AG04449 (cell line): ENCODE measurements at regions of chr9 and their contacts with region 1.

Region 1: GRCh38 chr9:115591584-115591984 is 473.6 kb upstream of the TNC start:
- DNase-seq: peak; percentile 99
- H3K4me3 ChIP-seq: no peak overlapping the region
- CTCF ChIP-seq: peak; percentile 74

Region 2: GRCh38 chr9:115575147-115575546 is 16.4 kb before region 1 on chr9:
- CTCF ChIA-PET with region 1: interaction called, 11 read pairs
- POLR2A ChIA-PET with region 1: no interaction called
- DNase-seq: no peak
- H3K4me3 ChIP-seq: no peak overlapping the region
- CTCF ChIP-seq: no peak

Region 3: DNA sequence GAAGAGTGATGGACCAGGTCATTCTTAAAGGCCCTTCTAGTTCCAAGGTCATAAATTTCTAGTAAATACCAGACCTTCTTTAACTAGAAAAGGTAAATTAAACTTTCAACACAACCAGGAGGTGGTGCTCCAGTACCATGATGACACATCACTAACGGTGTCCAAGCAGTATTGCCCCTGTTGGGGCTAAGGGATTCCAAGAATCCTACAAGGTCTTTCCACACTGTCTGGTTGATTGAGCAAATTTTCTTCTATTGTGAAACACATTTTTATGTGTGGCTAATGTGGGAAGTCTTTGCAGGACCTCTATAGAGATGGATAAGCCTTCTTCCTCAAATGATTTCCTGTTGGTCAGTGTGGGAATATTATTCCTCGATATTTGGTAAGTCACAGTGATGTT is 102.4 kb after region 1 on chr9:
- CTCF ChIA-PET with region 1: interaction called, 86 read pairs
- POLR2A ChIA-PET with region 1: interaction called, 11 read pairs
- DNase-seq: peak; percentile 91
- H3K4me3 ChIP-seq: no peak overlapping the region
- CTCF ChIP-seq: peak; percentile 33

Region 4: GRCh38 chr9:115930509-115930908 is 338.9 kb after region 1 on chr9:
- CTCF ChIA-PET with region 1: interaction called, 12 read pairs
- POLR2A ChIA-PET with region 1: no interaction called
- DNase-seq: no peak
- H3K4me3 ChIP-seq: no peak overlapping the region
- CTCF ChIP-seq: no peak

Region 5: GRCh38 chr9:116208417-116209232 is 617.0 kb after region 1 on chr9:
- CTCF ChIA-PET with region 1: interaction called, 11 read pairs
- POLR2A ChIA-PET with region 1: interaction called, 3 read pairs
- DNase-seq: peak; percentile 49
- H3K4me3 ChIP-seq: no peak overlapping the region
- CTCF ChIP-seq: peak; percentile 28

Region 6: DNA sequence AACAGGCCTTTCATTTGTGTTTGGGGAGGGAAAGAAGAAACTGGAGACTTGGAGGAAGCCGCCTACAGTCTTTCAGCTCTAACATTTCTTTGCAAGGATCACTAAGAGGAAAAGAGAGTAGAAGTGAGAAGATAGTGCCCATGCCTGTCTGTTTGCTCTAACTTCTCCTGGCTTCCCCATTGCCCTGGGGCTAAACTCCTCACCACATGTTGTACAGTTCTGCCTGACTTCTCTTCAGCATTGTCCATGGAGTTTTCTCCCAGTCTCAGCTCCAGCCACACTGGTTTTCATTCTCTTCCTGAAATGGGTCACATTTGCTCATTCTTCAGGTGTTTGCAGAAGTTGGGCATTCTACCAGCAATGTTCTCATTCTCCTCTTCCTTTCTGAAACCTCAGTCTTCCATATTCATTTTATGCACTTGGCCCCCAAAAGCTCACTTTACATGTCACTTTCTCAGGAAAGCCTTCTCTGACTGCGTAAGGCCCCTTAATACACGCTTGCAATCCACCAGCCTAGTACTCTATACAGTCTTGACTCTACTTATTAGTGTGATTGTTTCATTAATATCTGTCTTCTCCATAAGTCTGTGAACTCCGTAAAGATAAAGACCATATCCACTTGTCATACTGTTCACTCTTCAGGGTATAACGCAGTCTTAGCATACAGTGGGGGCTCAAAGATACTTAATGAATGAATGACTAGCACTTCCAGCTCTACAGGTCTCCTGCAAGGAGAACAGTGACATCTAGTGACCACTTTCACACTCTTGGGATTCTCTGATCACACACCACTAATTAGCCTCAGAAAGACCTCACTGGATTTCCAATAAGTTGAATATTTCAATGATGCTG is 1055.3 kb after region 1 on chr9:
- CTCF ChIA-PET with region 1: interaction called, 172 read pairs
- POLR2A ChIA-PET with region 1: no interaction called
- DNase-seq: no peak
- H3K4me3 ChIP-seq: no peak overlapping the region
- CTCF ChIP-seq: peak; percentile 62